ENCODE measurements at regions of chr1 and their contacts with region 1.

Region 1: DNA sequence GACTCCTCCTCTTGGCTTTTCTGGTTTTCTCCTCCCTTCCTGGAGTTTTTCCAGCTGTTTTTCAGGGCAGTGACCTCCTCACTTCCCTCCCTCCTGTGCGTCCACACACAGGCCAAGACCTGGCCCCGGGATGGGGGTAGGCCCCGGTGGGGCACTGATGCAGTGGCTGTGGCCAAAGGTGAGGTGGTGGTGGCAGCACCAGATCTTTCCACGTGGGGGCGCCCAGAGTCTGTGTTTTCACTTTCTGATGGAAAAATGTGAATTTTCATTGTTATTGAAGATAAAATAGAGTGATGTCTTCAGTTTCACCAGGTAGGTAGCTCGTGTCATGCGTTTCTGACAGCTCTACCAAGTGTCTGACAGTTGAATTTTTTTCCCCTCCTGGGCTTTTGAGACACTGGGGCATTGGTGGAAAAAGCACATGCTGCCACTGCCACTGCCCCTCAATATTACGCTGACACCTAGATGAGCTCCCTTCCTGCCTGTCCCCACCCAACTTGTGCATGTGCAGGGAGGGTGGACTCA is 39.9 kb upstream of the MAGOH start:
- DNase-seq: peak in 1 of 2 experiments; percentile 63
- H3K4me3 ChIP-seq: no peak overlapping the region
- H3K27ac ChIP-seq: no peak overlapping the region
- H3K4me1 ChIP-seq: peaks cover 11% of the 10 kb centered on the region; the same call in 1 of the 2 replicates
- H3K27me3 ChIP-seq: no peaks in the 10 kb centered on the region
- CTCF ChIP-seq: peak; percentile 88

Region 2: DNA sequence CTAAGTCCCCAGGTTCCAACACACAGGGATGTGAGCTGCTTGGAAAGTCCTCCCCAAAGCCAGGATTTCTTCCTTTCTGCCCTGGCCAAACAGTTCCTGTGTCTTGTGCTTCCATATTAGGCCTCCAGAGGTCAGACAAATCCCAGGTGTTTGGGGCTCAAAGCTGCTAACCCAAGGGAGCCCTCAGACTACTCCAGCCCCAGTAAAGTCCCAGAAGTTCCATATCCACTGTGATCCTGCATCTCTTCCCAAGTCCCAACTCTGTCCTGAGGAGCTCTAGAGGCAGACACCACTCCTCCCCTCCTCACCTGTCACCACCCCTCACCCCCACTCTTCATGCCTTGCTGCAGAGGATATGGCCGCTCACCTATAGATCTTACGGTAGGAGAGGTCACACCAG is 12.2 kb before region 1 on chr1:
- CTCF ChIA-PET with region 1: interaction called, 12 read pairs
- POLR2A ChIA-PET with region 1: no interaction called
- intact Hi-C with region 1: no loop called
- DNase-seq: no peak
- H3K4me3 ChIP-seq: no peak overlapping the region
- H3K27ac ChIP-seq: no peak overlapping the region
- H3K4me1 ChIP-seq: no peaks in the 10 kb centered on the region
- H3K27me3 ChIP-seq: no peaks in the 10 kb centered on the region
- CTCF ChIP-seq: peak; percentile 44; the same call in 1 of the 2 replicates

Region 3: DNA sequence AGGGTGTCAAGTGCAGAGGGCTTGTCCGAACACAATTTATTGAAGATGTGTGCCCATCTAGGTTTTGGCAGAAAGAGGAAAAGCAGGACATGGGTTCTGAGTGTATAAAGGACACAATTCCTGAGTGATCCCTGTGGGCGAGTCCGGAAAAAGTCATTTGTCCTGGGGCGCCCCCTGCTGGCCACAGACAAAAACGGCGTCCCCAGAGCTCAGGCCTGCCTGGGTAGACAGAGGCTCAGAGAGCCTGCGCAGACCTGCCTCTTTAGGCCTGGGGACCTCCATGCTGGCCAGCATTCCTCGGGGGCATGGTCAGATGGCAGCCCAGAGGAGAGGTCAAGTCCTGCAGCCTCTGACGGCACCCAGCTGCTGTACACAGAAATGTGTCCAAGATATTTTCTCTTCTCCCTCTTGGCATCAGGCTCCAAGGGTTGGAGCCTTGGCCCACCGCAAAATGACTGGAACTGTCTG is 115.1 kb after region 1 on chr1:
- CTCF ChIA-PET with region 1: interaction called, 18 read pairs
- POLR2A ChIA-PET with region 1: no interaction called
- intact Hi-C with region 1: loop called (anchors 1 kb)
- DNase-seq: peak in 1 of 2 experiments; percentile 81
- H3K4me3 ChIP-seq: no peak overlapping the region
- H3K27ac ChIP-seq: no peak overlapping the region
- H3K4me1 ChIP-seq: 0 out of 2 replicates have a peak, but pooled peaks cover 7% of the 10 kb centered on the region
- H3K27me3 ChIP-seq: peaks cover 31% of the 10 kb centered on the region; the same call in 1 of the 2 replicates
- CTCF ChIP-seq: peak; percentile 94

Region 4: DNA sequence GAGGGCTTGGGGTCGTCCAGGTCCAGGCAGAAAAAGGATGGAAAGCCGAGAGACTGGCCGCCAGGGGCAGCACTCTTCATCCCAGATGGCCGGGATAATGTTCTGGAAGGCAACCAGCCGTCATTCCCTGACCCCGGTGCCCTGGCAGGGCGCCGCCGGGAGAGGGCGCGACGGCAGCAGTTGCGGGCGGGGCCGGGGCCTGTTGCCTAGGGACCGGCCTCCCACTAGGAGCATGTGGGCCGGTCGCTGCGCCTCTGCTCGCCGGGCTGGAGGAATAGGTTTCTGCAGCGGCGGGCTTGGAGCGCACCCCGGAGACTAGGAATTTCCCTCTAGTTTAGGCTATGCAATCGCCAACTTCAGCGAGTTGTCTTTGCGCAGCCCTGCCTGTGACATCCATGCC is 191.9 kb after region 1 on chr1:
- CTCF ChIA-PET with region 1: no interaction called
- POLR2A ChIA-PET with region 1: no interaction called
- intact Hi-C with region 1: loop called (anchors 10 kb)
- DNase-seq: peak in 1 of 2 experiments; percentile 16
- H3K4me3 ChIP-seq: no peak overlapping the region
- H3K27ac ChIP-seq: no peak overlapping the region
- H3K4me1 ChIP-seq: no peaks in the 10 kb centered on the region
- H3K27me3 ChIP-seq: peaks cover 7% of the 10 kb centered on the region; the same call in 1 of the 2 replicates
- CTCF ChIP-seq: no peak